ENCODE measurements at regions of chr11 and their contacts with region 1.

Region 1: GRCh38 chr11:3412837-3413236 is 33.9 kb upstream of the ZNF195 start:
- DNase-seq: peak in 1 of 5 donors; percentile 7
- H3K4me3 ChIP-seq: no peak overlapping the region
- H3K27ac ChIP-seq: no peak overlapping the region
- H3K4me1 ChIP-seq: no peaks in the 10 kb centered on the region
- H3K27me3 ChIP-seq: no peaks in the 10 kb centered on the region
- CTCF ChIP-seq: no peak
- EP300 ChIP-seq: no peak
- POLR2A ChIP-seq: no peak

Region 2: DNA sequence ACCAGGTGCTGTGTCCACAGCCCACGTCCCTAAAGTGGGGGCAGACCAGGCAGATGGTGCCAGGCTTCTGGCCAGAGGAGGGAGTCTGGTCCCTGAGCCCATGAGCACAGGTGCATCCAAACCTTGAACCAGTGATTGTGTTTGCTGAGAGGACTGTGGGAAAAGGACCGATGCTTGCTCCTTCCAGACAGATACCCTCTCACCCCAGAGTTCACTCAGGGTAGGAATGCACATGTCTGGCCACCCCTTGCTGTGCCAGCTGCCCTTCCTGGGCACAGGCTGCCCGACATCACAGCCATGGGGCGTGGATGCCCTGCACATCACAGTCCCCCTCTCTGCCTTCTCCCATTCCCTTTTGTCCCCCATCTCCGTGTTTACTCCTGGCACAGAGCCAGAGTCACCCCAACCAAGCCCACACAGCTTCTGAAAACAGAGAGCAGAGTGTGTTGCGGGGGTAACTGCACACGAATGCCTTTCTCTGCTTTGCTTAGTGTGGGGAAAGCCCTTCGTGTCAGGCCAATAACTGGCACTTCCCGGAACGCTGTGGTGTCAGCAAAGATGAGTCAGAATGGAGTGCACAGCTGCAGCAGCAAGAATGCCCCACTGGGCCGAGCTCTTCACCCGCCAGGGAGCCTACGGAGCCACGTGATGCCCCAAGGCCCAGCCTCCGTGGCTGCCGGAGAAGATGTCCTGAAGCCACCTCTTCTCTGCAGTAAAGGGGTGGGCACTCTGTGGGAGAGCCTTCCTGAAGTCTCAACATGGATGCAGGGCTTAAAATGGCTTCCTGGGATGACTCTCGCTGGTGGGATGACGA is 363.2 kb before region 1 on chr11:
- intact Hi-C with region 1: loop called in 1 of 4 experiments (anchors 10 kb)
- DNase-seq: peak; percentile 55 to 73 (median 65)
- H3K4me3 ChIP-seq: no peak overlapping the region
- H3K27ac ChIP-seq: no peak overlapping the region
- H3K4me1 ChIP-seq: peaks cover 4% of the 10 kb centered on the region
- H3K27me3 ChIP-seq: no peaks in the 10 kb centered on the region
- CTCF ChIP-seq: no peak
- EP300 ChIP-seq: no peak
- POLR2A ChIP-seq: no peak

Region 3: DNA sequence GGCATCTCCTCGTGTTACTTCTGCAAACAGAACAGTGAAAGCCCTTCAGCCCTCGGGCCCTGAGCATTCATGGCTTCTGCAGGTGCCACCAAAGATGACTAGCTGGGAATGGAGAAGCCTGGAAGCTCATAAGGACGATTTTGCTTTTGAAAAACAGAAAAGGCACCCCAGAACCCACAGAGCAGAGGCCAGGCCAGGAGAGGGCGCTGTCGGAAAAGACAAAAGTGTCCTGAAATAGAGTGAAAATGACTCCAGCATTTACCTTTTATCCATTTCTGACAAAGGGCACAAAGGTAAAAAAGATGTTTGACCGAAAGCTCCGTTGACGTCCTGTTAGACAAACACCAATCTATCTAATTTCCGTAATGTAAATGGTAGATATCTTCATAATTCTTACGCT is 71.5 kb before region 1 on chr11:
- intact Hi-C with region 1: loop called in 1 of 4 experiments (anchors 10 kb)
- DNase-seq: peak in 4 of 5 donors; percentile 37 to 61 (median 43)
- H3K4me3 ChIP-seq: no peak overlapping the region
- H3K27ac ChIP-seq: no peak overlapping the region
- H3K4me1 ChIP-seq: no peaks in the 10 kb centered on the region
- H3K27me3 ChIP-seq: no peaks in the 10 kb centered on the region
- CTCF ChIP-seq: peak in 1 of 3 donors; percentile 12
- EP300 ChIP-seq: no peak
- POLR2A ChIP-seq: no peak

Region 4: GRCh38 chr11:3614742-3615171 is 201.9 kb after region 1 on chr11:
- intact Hi-C with region 1: no loop called
- DNase-seq: no peak
- H3K4me3 ChIP-seq: no peak overlapping the region
- H3K27ac ChIP-seq: no peak overlapping the region
- H3K4me1 ChIP-seq: peaks cover 3% of the 10 kb centered on the region
- H3K27me3 ChIP-seq: no peaks in the 10 kb centered on the region
- CTCF ChIP-seq: no peak
- EP300 ChIP-seq: no peak
- POLR2A ChIP-seq: no peak

Measured in ovary (tissue), 10 donors.